PC-3 (cell line): ENCODE measurements at regions of chr6 and their contacts with region 1.

Region 1: DNA sequence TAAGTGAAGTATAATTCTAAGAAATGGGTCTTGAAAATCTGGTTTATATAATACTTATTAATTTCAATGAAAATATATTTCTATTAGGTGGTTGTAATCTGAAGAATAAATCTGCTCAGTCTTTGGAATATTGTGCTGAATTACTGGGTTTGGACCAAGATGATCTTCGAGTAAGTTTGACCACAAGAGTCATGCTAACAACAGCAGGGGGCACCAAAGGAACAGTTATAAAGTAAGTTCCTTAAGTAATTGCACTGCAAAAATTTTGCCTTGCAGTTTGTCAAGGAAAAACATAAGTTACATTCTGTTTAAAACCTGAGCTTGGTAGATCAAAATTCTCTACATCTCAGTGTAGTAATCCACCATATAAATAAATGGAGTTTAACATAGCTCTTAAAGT is 106.0 kb downstream of the MYO6 start:
- DNase-seq: peak; percentile 70
- ATAC-seq: 0 out of 2 replicates have a peak, but pooled peaks have one; percentile 32
- H3K4me3 ChIP-seq: no peak overlapping the region
- H3K27ac ChIP-seq: no peak overlapping the region
- H3K4me1 ChIP-seq: peaks cover 35% of the 10 kb centered on the region
- H3K27me3 ChIP-seq: no peaks in the 10 kb centered on the region
- CTCF ChIP-seq: peak; percentile 60; the same call in 1 of the 2 replicates

Region 2: DNA sequence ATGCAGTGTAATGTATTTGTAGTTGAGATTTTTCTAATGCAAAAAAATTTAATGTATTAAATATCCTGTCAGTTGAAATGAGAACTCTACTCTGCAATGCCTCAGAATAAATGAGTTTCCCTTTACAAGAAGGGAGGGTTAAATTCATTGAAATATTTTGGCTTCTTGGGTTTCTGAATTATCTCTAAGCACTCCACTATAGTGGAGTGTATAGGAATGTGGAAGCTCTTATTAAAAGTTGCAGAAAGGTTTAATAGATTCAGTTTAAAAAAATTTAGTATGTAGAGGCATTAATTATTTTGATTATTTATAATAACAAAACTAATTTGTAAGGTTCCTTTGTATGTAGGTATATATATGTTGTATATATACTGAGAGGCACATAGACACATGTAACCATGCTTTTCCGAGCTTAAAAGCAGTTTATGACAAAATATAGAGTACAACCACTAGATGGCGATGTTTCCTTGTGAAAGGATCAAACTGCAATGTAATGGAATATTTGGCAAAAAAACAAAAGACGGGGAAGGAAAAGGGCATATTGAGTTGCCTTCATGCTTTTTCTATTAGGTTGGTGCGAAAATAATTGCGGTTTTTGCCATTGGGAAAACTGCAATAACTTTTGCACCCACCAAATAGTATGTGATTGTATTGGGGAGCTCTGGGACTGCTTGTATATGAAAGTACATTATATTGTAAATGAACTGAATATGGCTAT is 38.2 kb after region 1 on chr6:
- CTCF ChIA-PET with region 1: interaction called, 3 read pairs
- POLR2A ChIA-PET with region 1: no interaction called
- intact Hi-C with region 1: loop called (anchors 5 kb)
- DNase-seq: peak; percentile 78
- ATAC-seq: peak; percentile 33
- H3K4me3 ChIP-seq: no peak overlapping the region
- H3K27ac ChIP-seq: no peak overlapping the region
- H3K4me1 ChIP-seq: no peaks in the 10 kb centered on the region
- H3K27me3 ChIP-seq: no peaks in the 10 kb centered on the region
- CTCF ChIP-seq: peak; percentile 70

Region 3: DNA sequence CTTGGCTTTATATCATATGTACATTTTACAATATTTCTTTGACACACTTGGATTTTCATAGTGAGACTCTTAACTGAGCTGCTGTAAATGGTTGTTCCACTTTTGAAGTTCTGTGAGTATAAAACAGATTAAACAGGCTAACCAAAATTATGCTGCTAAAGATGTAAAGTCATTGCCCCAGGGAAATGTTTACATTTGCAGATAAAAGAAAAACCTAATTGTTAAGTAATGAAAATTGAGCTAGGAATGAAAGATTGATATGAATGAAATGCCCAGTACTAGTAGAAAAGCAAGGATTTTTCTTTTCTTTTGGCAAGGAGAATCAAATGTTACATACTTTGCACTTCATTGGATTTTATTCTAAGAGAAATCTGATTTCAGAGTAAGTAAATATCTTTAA is 58.0 kb after region 1 on chr6:
- CTCF ChIA-PET with region 1: no interaction called
- POLR2A ChIA-PET with region 1: no interaction called
- intact Hi-C with region 1: loop called (anchors 5 kb)
- DNase-seq: no peak
- ATAC-seq: no peak
- H3K4me3 ChIP-seq: no peak overlapping the region
- H3K27ac ChIP-seq: no peak overlapping the region
- H3K4me1 ChIP-seq: no peaks in the 10 kb centered on the region
- H3K27me3 ChIP-seq: no peaks in the 10 kb centered on the region
- CTCF ChIP-seq: no peak